ENCODE measurements at regions of chr9 and their contacts with region 1.

Region 1: DNA sequence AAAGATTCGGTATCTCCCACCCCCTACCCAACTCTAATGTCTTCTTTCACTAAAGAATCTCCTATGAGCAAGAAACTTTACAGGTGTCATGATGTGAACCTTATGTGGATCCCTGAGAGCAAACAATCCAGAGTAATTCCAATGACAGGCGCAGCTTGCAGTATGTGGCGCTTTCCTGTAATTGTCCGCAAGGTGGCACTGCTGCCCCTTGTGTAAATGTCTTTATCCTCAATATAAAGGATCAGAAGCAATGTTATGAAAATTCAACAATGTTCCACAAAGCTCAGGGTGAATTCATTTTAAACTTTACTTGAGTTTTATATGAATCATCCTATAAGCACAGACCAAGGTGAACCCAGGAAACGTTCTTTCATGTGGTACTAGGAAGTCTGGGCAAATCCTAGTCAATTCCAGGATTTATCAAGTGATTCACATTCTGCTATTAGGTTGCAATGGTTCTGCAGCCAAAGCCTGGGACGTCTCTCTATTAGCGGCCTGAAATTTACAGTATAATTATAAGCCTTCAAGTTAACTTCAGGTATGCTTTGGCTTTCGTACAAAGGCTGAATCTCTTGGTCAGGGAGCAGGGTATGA is 113.7 kb downstream of the TRPM6 start:
- DNase-seq: peak; percentile 74
- H3K4me3 ChIP-seq: no peak overlapping the region
- H3K27ac ChIP-seq: no peak overlapping the region
- H3K4me1 ChIP-seq: no peaks in the 10 kb centered on the region
- H3K27me3 ChIP-seq: no peaks in the 10 kb centered on the region
- CTCF ChIP-seq: peak; percentile 89

Region 2: DNA sequence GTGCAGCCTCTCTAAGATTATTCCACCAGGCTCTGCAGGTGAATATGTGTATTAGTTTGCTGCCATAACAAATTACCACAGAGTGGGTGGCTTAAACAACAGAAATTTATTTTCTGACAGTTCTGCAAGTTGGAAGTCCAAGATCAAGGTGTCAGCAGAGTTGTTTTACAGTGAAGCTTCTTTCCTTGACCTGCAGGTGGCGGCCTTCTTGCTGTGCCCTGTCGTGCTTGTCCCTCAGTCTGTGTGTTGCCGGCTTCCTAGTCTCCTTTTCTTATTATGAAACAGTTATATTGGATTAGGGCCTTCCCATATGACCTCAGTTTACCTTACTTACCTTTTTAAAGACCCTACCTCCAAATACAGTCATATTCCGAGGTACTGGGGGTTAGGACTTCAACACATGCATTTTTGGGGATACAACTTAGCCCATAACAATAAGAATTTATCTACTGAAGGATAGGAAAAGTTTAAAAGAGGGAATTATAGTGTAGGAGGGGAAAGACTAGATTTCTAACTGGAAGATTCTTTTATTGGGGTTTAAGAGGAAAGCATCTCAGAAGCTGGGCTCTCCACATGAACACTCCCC is 411.7 kb after region 1 on chr9:
- CTCF ChIA-PET with region 1: no interaction called
- POLR2A ChIA-PET with region 1: no interaction called
- intact Hi-C with region 1: loop called (anchors 5 kb)
- DNase-seq: peak; percentile 58
- H3K4me3 ChIP-seq: no peak overlapping the region
- H3K27ac ChIP-seq: no peak overlapping the region
- H3K4me1 ChIP-seq: no peaks in the 10 kb centered on the region
- H3K27me3 ChIP-seq: no peaks in the 10 kb centered on the region
- CTCF ChIP-seq: peak; percentile 77